ENCODE measurements at regions of chr12 and their contacts with region 1.

Region 1: GRCh38 chr12:2696136-2696535 is 98.6 kb upstream of the FKBP4 start:
- DNase-seq: no peak
- ATAC-seq: no peak
- H3K4me3 ChIP-seq: no peak overlapping the region
- H3K4me3 Mint-ChIP-seq: no peak overlapping the region
- H3K27ac ChIP-seq: no peak overlapping the region
- H3K27ac Mint-ChIP-seq: no peak overlapping the region
- H3K4me1 ChIP-seq: peaks cover 12% of the 10 kb centered on the region
- H3K4me1 Mint-ChIP-seq: peaks cover 25% of the 10 kb centered on the region
- H3K27me3 ChIP-seq: peaks cover 0 to 10% of the 10 kb centered on the region in 2 experiments
- H3K27me3 Mint-ChIP-seq: peaks cover 30% of the 10 kb centered on the region
- CTCF ChIP-seq: no peak

Region 2: GRCh38 chr12:2845280-2845679 is 149.1 kb after region 1 on chr12:
- CTCF ChIA-PET with region 1: no interaction called
- POLR2A ChIA-PET with region 1: no interaction called
- intact Hi-C with region 1: no loop called
- DNase-seq: no peak
- ATAC-seq: no peak
- H3K4me3 ChIP-seq: no peak overlapping the region
- H3K4me3 Mint-ChIP-seq: no peak overlapping the region
- H3K27ac ChIP-seq: no peak overlapping the region
- H3K27ac Mint-ChIP-seq: no peak overlapping the region
- H3K4me1 ChIP-seq: no peaks in the 10 kb centered on the region
- H3K4me1 Mint-ChIP-seq: no peaks in the 10 kb centered on the region
- H3K27me3 ChIP-seq: no peaks in the 10 kb centered on the region
- H3K27me3 Mint-ChIP-seq: no peaks in the 10 kb centered on the region
- CTCF ChIP-seq: no peak

Region 3: GRCh38 chr12:2940564-2940963 is 244.4 kb after region 1 on chr12:
- CTCF ChIA-PET with region 1: no interaction called
- POLR2A ChIA-PET with region 1: no interaction called
- intact Hi-C with region 1: no loop called
- DNase-seq: no peak
- ATAC-seq: no peak
- H3K4me3 ChIP-seq: no peak overlapping the region
- H3K4me3 Mint-ChIP-seq: no peak overlapping the region
- H3K27ac ChIP-seq: no peak overlapping the region
- H3K27ac Mint-ChIP-seq: no peak overlapping the region
- H3K4me1 ChIP-seq: peaks cover 3% of the 10 kb centered on the region
- H3K4me1 Mint-ChIP-seq: no peaks in the 10 kb centered on the region
- H3K27me3 ChIP-seq: no peaks in the 10 kb centered on the region
- H3K27me3 Mint-ChIP-seq: no peaks in the 10 kb centered on the region
- CTCF ChIP-seq: no peak

Region 4: DNA sequence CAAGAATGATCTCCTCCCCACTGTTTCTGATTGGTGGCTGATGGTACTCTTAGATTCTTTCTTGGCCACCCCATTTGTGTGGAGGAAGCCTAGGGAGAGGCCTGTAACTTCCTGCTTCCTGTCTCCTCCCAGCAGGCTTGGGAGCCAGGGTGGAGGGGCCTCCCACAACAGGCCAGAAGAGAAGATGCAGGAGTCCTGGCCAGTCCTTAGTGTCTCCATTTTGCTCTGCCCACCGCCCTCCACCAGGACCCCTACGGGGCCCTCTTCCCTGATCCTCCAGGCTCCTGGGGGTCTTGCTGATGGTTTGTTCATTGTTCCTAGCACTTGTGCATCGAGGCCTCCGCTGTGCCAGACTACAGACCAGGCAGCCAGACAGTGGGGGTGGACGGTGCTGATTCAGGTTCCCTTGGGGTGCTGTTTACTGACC is 387.8 kb after region 1 on chr12:
- CTCF ChIA-PET with region 1: no interaction called
- POLR2A ChIA-PET with region 1: no interaction called
- intact Hi-C with region 1: loop called in 1 of 2 experiments (anchors 5 kb)
- DNase-seq: no peak
- ATAC-seq: no peak
- H3K4me3 ChIP-seq: no peak overlapping the region
- H3K4me3 Mint-ChIP-seq: no peak overlapping the region
- H3K27ac ChIP-seq: no peak overlapping the region
- H3K27ac Mint-ChIP-seq: no peak overlapping the region
- H3K4me1 ChIP-seq: peaks cover 6% of the 10 kb centered on the region
- H3K4me1 Mint-ChIP-seq: no peaks in the 10 kb centered on the region
- H3K27me3 ChIP-seq: no peaks in the 10 kb centered on the region
- H3K27me3 Mint-ChIP-seq: no peaks in the 10 kb centered on the region
- CTCF ChIP-seq: no peak